ENCODE measurements at regions of chr3 and their contacts with region 1.

Region 1: GRCh38 chr3:170414202-170414663 is 4.4 kb upstream of the CLDN11 start:
- DNase-seq: peak; percentile 93
- ATAC-seq: peak; percentile 41
- H3K4me3 ChIP-seq: no peak overlapping the region
- H3K27ac ChIP-seq: no peak overlapping the region
- H3K4me1 ChIP-seq: peaks cover 2% of the 10 kb centered on the region
- H3K27me3 ChIP-seq: no peaks in the 10 kb centered on the region
- CTCF ChIP-seq: peak; percentile 98
- POLR2A ChIP-seq: no peak
- RAD21 ChIP-seq: peak; percentile 96

Region 2: GRCh38 chr3:170189398-170190256 is 224.6 kb before region 1 on chr3:
- CTCF ChIA-PET with region 1: no interaction called
- POLR2A ChIA-PET with region 1: no interaction called
- dilution Hi-C with region 1: no loop called
- in situ Hi-C with region 1: no loop called
- intact Hi-C with region 1: loop called (anchors 1 kb)
- DNase-seq: no peak
- ATAC-seq: peak; percentile 73
- H3K4me3 ChIP-seq: no peak overlapping the region
- H3K27ac ChIP-seq: no peak overlapping the region
- H3K4me1 ChIP-seq: peaks cover 5% of the 10 kb centered on the region; the same call in 1 of the 2 replicates
- H3K27me3 ChIP-seq: no peaks in the 10 kb centered on the region
- CTCF ChIP-seq: no peak
- POLR2A ChIP-seq: no peak
- RAD21 ChIP-seq: no peak

Region 3: DNA sequence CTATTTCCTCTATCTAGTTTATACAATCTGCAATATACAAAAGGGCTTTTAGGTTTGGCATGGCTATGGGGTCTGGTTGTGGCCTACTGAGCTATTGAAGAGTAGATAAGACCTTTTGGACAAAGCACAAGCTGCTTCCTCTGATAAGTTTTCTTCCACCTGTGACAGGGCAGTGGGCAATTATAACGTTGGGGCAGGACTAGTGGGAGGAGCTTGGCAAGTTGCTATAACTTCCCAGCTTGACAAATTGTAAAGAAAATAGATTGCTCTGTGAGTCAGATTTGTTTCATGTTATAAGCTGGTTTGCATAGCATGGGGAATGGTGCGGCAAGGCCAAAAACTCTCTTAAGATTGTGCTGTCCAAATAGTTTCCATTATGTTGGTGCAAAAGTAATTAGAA is 106.8 kb after region 1 on chr3:
- CTCF ChIA-PET with region 1: no interaction called
- POLR2A ChIA-PET with region 1: no interaction called
- dilution Hi-C with region 1: no loop called
- in situ Hi-C with region 1: no loop called
- intact Hi-C with region 1: no loop called
- DNase-seq: peak; percentile 38
- ATAC-seq: no peak
- H3K4me3 ChIP-seq: no peak overlapping the region
- H3K27ac ChIP-seq: no peak overlapping the region
- H3K4me1 ChIP-seq: no peaks in the 10 kb centered on the region; the same call in 1 of the 2 replicates
- H3K27me3 ChIP-seq: no peaks in the 10 kb centered on the region
- CTCF ChIP-seq: no peak
- POLR2A ChIP-seq: no peak
- RAD21 ChIP-seq: no peak

Region 4: DNA sequence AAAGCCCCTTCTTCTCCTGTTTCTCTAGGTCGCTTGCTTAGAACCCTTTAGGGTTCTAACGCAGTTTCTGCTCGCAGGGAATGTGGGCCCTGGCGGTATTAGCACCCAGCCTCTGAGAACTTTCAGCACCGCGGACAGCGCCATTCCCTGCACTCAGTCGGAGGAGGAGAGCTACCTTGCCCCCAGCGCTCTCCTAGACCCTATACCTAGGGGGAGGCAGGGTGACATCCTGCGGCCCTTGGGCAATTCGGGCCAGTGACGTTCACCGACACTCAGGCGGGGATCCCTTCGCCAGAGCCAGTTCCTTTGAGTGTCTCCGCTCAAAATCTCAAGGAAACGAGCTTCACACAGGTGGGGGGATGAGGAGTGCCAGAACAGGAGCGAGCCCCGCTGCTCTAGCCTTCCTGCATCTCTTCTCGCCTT is 170.4 kb after region 1 on chr3:
- CTCF ChIA-PET with region 1: interaction called, 3 read pairs
- POLR2A ChIA-PET with region 1: no interaction called
- dilution Hi-C with region 1: no loop called
- in situ Hi-C with region 1: no loop called
- intact Hi-C with region 1: loop called (anchors 2 kb)
- DNase-seq: peak; percentile 68
- ATAC-seq: peak; percentile 85
- H3K4me3 ChIP-seq: no peak overlapping the region; the same call in 1 of the 2 replicates
- H3K27ac ChIP-seq: no peak overlapping the region
- H3K4me1 ChIP-seq: no peaks in the 10 kb centered on the region
- H3K27me3 ChIP-seq: peaks cover 35% of the 10 kb centered on the region
- CTCF ChIP-seq: no peak
- POLR2A ChIP-seq: no peak
- RAD21 ChIP-seq: peak; percentile 28; the same call in 1 of the 2 replicates

Region 5: DNA sequence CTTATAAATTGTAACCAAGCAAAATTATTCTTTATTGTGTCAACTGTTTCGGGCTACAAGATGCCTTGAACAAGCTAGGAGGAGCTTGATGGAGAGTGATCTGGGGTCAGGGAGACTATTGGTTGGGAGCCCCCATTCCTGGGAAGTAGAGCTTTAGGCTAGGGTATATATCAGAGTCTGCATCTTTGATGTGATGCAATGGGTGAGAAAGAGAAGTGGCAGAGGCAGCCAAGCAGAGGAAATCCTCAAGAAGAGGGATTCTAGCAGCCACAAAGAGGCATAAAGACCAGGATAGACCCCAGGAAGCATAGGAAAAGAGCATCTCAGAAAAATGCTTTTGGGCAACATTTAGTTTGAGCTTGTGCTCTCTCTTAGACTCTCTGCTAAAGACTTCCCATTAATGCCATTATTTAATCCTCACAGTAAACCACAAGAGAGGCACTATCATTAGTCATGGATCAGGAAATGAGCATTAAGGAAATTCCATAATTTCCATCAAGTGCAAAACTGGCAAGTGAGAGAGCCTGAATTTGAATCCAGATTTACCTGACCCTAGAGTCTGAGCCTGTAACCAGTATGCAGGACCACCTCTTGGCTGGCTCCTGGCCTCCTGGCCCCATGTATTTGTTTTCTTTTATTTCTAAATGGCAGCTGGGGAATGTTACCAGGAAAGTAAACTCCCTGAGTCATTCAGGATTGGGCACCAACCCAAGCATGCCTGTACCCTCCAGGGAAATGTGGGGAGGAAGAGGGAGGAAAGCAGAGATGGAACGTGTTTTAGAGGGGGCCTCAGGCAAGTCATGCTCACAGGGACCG is 337.1 kb after region 1 on chr3:
- CTCF ChIA-PET with region 1: interaction called, 4 read pairs
- POLR2A ChIA-PET with region 1: interaction called, 6 read pairs
- dilution Hi-C with region 1: no loop called
- in situ Hi-C with region 1: no loop called
- intact Hi-C with region 1: loop called (anchors 5 kb)
- DNase-seq: peak; percentile 82
- ATAC-seq: peak; percentile 57
- H3K4me3 ChIP-seq: no peak overlapping the region
- H3K27ac ChIP-seq: peak overlapping the region; percentile 97
- H3K4me1 ChIP-seq: peaks cover 28% of the 10 kb centered on the region
- H3K27me3 ChIP-seq: no peaks in the 10 kb centered on the region
- CTCF ChIP-seq: no peak
- POLR2A ChIP-seq: no peak
- RAD21 ChIP-seq: no peak

Region 6: DNA sequence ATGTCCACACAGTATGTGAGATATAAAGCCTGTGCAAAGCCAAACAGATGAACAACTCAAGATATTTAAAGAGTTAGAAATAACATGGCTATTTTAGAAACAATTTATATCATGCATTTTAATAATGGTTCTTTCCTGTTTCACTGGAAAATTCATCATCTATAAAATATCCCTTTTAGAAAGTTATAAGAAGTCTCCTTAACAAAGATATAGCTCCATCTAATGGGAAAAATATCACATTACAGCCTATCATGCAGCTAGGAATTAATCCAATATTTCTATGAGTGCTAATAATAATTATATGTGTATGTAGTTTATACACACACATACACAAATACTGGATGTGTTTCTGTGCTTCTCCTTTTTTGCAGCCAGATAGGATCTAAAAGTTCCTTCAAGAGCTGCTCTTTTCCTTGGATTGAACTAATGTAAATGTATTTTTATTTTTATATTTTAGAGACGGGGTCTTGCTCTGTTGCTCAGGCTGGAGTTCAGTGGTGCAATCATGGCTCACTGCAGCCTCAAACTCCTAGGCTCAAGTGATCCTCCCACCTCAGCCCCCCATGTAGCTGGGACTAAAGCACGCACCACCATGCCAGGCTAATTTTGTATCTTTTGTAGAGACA is 434.2 kb after region 1 on chr3:
- CTCF ChIA-PET with region 1: interaction called, 6 read pairs
- POLR2A ChIA-PET with region 1: no interaction called
- dilution Hi-C with region 1: loop called (anchors 10 kb)
- in situ Hi-C with region 1: no loop called
- intact Hi-C with region 1: loop called (anchors 1 kb)
- DNase-seq: peak; percentile 52
- ATAC-seq: peak; percentile 67; the same call in 1 of the 2 replicates
- H3K4me3 ChIP-seq: no peak overlapping the region
- H3K27ac ChIP-seq: no peak overlapping the region
- H3K4me1 ChIP-seq: no peaks in the 10 kb centered on the region
- H3K27me3 ChIP-seq: no peaks in the 10 kb centered on the region; the same call in 1 of the 2 replicates
- CTCF ChIP-seq: peak; percentile 65
- POLR2A ChIP-seq: no peak
- RAD21 ChIP-seq: peak; percentile 63